Sigmoid colon (tissue), 7 donors: ENCODE measurements at regions of chr1 and their contacts with region 1.

Region 1: DNA sequence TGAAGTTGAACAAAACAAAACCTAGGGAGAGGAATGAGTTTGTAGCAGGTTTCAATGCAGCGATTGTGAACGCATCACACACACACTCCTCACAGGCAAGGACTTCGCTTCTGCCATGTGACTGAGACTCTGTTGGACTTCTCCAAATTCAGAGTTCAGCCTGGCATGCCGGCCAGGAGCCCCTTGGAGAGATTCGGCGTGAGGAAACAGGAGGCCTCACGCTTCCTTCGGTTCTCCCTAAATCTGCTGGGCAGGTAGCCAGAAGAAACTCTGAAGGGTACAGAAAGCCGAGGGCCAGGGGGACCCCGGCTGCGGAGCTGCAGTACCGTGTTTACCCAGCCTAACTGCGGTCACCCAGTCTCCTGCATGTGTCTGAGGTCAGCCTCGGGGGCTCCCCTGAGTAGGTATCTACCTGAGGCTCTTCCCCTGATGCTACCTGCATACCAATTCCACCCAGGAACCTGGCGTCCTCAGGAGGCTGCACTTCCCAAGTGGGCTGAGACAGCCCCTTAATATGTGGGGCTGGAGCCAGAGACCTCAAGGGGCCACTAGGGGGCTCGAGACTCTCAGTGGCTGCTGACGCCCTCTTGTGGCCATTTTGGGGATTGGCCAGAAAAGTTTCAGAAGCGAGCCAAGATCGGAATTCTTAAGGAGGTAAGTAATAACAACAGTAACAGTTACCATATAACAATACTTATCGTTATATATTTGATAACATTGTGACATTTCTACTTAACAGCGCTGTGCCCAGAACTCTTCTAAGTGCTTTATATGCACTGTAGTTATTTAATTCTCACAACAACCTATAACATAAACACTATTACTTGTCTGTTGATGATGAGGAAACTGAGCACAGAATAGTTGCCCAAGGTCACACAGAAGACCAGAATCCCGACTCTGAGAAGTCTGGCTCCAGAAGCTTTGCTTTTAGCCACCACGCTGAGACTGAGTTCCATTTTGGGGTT is 2.7 kb upstream of the ANXA9 start:
- DNase-seq: peak; percentile 93
- H3K4me3 ChIP-seq: peak overlapping the region in 1 of 4 donors; percentile 34
- H3K27ac ChIP-seq: peak overlapping the region; percentile 53 to 97 (median 80)
- H3K4me1 ChIP-seq: peaks cover 0 to 32% (median 22%) of the 10 kb centered on the region in 4 donors
- H3K27me3 ChIP-seq: no peaks in the 10 kb centered on the region
- CTCF ChIP-seq: peak; percentile 97 to 100 (median 98)
- EP300 ChIP-seq: no peak
- POLR2A ChIP-seq: no peak

Region 2: GRCh38 chr1:150876119-150876454 is 103.3 kb before region 1 on chr1:
- intact Hi-C with region 1: loop called (anchors 5 kb)
- DNase-seq: no peak
- H3K4me3 ChIP-seq: peak overlapping the region; percentile 71 to 100 (median 91)
- H3K27ac ChIP-seq: peak overlapping the region; percentile 92 to 100 (median 96)
- H3K4me1 ChIP-seq: peaks cover 0 to 25% (median 16%) of the 10 kb centered on the region in 4 donors
- H3K27me3 ChIP-seq: no peaks in the 10 kb centered on the region
- CTCF ChIP-seq: no peak
- EP300 ChIP-seq: no peak
- POLR2A ChIP-seq: no peak

Region 3: DNA sequence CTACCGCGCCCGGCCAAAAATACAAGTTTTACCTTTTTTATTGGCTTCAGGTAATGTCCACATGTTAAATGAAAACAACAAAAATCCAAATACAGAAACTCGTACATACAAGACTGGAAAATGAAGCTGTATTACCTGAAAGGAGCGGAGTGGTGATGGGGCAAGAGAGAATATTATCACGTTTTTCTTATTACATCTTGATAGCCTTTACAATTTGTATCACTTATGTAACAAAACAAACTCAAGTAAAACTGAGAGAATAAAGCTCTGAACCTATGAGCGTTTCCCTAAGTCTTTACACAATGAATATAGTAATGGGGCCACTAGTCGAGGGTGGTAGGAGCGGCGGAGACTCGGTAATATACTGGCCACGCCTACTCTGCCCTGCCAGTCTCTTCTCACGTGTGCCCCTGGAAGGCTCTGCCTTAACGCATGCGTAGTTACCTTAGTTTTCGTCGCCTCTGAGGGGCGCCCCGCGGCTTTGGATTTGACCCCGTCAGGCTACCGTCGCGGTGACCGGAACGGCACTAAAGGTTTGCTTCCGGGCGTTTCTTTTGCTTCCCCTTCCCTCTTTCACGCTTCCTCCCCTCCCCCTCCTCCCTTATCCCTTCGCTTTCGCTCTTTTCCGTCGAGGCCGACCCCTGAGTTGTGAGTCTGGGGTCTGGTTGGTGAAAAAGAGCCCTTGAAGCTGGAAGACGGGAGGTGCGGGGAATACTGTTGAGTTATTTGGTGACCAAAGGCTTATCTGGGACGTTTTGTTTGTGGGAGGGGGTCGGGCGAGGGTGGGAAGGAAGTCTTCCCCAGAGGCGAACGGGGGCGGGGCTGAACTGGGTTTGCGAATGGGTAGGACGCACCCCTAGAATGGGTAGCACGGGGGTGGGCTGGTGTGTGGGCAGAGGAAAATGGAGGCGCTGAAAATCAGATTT is 53.3 kb before region 1 on chr1 and contains the start of gene SETDB1:
- intact Hi-C with region 1: loop called (anchors 5 kb)
- DNase-seq: peak; percentile 98
- H3K4me3 ChIP-seq: peak within 1 kb of the TSS; percentile 77 to 90 (median 86)
- H3K27ac ChIP-seq: peak within 1 kb of the TSS; percentile 80 to 94 (median 88)
- H3K4me1 ChIP-seq: peaks cover 0 to 15% (median 13%) of the 10 kb centered on the region in 4 donors
- H3K27me3 ChIP-seq: no peaks in the 10 kb centered on the region
- CTCF ChIP-seq: no peak
- EP300 ChIP-seq: peak in 1 of 4 donors; percentile 74
- POLR2A ChIP-seq: no peak
- total RNA-seq, gene SETDB1: 23.9 to 36.0 (median 30.3) TPM

Region 4: GRCh38 chr1:151006327-151007052 is 27.1 kb after region 1 on chr1 and contains the start of gene MINDY1:
- intact Hi-C with region 1: loop called (anchors 1 kb)
- DNase-seq: peak; percentile 90
- H3K4me3 ChIP-seq: peak within 1 kb of the TSS; percentile 56 to 73 (median 66)
- H3K27ac ChIP-seq: peak within 1 kb of the TSS; percentile 85 to 93 (median 88)
- H3K4me1 ChIP-seq: peaks cover 0 to 75% (median 60%) of the 10 kb centered on the region in 4 donors
- H3K27me3 ChIP-seq: no peaks in the 10 kb centered on the region
- CTCF ChIP-seq: peak; percentile 34 to 62 (median 56)
- EP300 ChIP-seq: no peak
- POLR2A ChIP-seq: peak; percentile 69 to 74
- total RNA-seq, gene MINDY1: 21.7 to 51.8 (median 27.0) TPM

Region 5: DNA sequence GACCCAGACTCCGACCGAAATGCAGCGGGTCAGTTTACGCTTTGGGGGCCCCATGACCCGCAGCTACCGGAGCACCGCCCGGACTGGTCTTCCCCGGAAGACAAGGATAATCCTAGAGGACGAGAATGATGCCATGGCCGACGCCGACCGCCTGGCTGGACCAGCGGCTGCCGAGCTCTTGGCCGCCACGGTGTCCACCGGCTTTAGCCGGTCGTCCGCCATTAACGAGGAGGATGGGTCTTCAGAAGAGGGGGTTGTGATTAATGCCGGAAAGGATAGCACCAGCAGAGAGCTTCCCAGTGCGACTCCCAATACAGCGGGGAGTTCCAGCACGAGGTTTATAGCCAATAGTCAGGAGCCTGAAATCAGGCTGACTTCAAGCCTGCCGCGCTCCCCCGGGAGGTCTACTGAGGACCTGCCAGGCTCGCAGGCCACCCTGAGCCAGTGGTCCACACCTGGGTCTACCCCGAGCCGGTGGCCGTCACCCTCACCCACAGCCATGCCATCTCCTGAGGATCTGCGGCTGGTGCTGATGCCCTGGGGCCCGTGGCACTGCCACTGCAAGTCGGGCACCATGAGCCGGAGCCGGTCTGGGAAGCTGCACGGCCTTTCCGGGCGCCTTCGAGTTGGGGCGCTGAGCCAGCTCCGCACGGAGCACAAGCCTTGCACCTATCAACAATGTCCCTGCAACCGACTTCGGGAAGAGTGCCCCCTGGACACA is 68.7 kb after region 1 on chr1:
- intact Hi-C with region 1: loop called (anchors 5 kb)
- DNase-seq: peak; percentile 89
- H3K4me3 ChIP-seq: peak overlapping the region; percentile 50 to 87 (median 70)
- H3K27ac ChIP-seq: peak overlapping the region; percentile 89 to 96 (median 92)
- H3K4me1 ChIP-seq: peaks cover 0 to 29% (median 18%) of the 10 kb centered on the region in 4 donors
- H3K27me3 ChIP-seq: no peaks in the 10 kb centered on the region
- CTCF ChIP-seq: no peak
- EP300 ChIP-seq: no peak
- POLR2A ChIP-seq: peak; percentile 2 to 4